ENCODE measurements at regions of chr6 and their contacts with region 1.

Region 1: DNA sequence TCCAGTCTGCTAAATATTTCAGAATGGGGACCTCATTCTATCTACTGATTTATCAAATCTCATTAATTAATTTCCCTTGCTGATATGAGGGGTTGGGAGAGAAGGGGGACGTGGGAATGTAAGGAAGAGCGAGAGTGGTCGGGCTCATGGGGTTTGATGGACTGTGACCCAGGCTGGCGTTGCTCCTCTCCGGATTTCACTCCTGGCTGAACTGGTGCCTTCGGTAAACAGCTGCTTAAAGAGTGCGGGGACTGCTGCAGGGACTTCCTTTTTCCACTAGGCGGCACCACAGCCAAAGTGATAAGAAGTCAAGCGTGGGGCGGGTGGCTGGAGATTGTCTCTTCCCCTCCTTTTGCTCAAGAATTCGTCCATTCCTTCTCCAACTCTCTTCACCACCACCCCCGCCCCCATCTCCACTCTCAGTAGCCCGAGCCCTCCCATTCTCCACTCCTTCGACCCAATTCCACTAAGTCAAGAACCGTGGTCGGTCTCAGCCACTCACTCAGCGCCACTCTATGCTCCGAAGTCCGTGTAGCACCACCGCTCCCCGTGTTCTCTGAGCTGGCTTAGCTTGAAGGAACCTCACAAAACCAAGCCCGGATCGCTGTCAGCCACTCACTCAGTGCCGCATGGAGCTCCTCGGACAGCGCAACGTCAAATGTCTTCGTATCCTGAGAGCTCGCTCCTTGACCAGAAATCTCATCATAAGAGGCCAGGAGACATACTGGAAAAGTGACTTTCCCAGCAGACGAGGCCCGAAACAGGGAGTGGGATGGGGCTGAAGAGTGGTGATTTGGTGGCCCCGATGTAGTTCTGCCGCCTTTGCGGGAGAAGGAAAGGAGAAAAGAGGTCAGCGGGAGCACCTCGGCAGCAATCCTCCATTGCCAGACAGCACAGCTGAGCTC is 9.7 kb downstream of the TRIM31 start:
- DNase-seq: peak; percentile 90
- H3K4me3 ChIP-seq: peak overlapping the region; percentile 17 to 27
- H3K27ac ChIP-seq: peak overlapping the region; percentile 62 to 64
- H3K4me1 ChIP-seq: peaks cover 16% of the 10 kb centered on the region
- H3K27me3 ChIP-seq: no peaks in the 10 kb centered on the region
- CTCF ChIP-seq: peak; percentile 52 to 97 (median 92)
- POLR2A ChIP-seq: no peak

Region 2: DNA sequence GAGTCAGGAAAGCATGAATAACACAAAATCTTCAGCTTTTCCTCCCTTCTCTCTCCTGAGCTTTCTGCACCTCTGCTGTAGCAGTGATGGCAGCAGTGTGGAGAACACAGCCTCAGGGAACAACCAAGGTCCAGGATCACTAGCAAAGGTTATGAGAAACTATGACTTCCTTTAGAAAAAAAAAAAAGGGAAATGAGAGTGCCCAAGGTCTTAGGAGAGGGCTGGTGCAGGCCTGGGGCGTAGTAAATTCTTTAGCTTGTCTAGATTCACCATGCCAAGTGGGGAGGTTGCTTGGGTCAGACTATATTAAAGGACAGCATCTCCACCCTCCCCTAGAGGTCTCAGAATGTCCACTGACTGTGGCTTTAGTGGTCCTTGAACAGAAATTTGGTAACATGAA is 82.6 kb before region 1 on chr6:
- intact Hi-C with region 1: no loop called
- DNase-seq: no peak
- H3K4me3 ChIP-seq: no peak overlapping the region
- H3K27ac ChIP-seq: no peak overlapping the region
- H3K4me1 ChIP-seq: no peaks in the 10 kb centered on the region
- H3K27me3 ChIP-seq: no peaks in the 10 kb centered on the region
- CTCF ChIP-seq: no peak
- POLR2A ChIP-seq: no peak

Region 3: DNA sequence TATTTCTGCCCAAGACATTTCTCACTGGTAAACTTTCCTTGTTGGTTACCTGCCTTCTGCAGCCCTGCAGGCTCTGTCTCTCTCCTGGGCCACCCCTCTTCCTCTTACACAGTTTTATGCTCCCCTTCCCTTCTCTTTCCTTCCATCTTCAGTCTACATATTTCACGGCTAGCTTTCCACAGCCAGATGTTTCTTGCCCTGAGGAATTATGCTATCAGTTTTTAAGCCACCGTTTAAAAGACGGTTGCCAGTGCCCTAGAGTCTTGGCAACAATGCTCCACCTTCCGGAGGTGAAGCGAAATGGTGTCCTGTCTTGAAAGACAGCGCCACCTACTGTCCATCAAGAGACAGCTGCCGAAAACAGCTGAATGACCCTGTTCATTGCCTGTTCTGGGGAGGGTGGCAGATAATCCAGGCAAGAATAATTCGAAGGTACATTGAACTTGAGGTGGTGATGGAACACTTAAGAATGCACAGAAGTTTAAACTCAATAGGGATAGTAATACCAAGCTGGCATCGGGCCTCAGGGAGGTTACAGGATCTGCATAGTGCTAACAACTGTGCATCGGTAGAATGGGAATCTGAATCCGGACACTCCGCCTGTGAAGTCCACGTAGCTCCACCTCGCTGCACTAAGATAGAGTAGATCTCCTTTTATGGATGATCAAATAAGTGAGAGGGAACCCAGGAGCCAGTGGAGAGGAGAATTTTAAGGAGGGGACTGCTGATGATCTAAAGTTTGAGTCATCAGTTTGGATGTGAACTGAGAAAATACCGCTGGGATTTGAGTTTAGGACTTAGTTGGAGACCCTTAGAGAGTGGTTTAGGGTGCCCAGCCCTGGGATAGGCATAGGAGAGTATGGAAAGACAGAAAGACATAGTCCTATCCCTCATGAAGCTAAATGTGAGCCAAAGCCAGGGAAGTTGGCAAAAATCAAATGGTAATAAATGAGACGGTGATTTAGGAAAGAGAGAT is 28.0 kb after region 1 on chr6:
- intact Hi-C with region 1: loop called (anchors 2 kb)
- DNase-seq: peak; percentile 85
- H3K4me3 ChIP-seq: no peak overlapping the region
- H3K27ac ChIP-seq: no peak overlapping the region
- H3K4me1 ChIP-seq: no peaks in the 10 kb centered on the region
- H3K27me3 ChIP-seq: peaks cover 6% of the 10 kb centered on the region
- CTCF ChIP-seq: peak; percentile 86 to 96 (median 94)
- POLR2A ChIP-seq: no peak